ENCODE measurements at regions of chr2 and their contacts with region 1.

Region 1: GRCh38 chr2:160353166-160353565 is 140.4 kb downstream of the RBMS1 start:
- DNase-seq: peak; percentile 39 to 61 (median 55)
- H3K4me3 ChIP-seq: no peak overlapping the region
- H3K27ac ChIP-seq: no peak overlapping the region
- H3K4me1 ChIP-seq: peaks cover 0 to 7% (median 0%) of the 10 kb centered on the region in 4 experiments
- H3K27me3 ChIP-seq: no peaks in the 10 kb centered on the region

Region 2: GRCh38 chr2:160332318-160332717 is 20.8 kb before region 1 on chr2:
- CTCF ChIA-PET with region 1: interaction called, 14 read pairs
- POLR2A ChIA-PET with region 1: no interaction called
- DNase-seq: peak; percentile 30 to 47 (median 41)
- H3K4me3 ChIP-seq: no peak overlapping the region
- H3K27ac ChIP-seq: no peak overlapping the region
- H3K4me1 ChIP-seq: peaks cover 0 to 14% (median 8%) of the 10 kb centered on the region in 4 experiments
- H3K27me3 ChIP-seq: no peaks in the 10 kb centered on the region

Region 3: DNA sequence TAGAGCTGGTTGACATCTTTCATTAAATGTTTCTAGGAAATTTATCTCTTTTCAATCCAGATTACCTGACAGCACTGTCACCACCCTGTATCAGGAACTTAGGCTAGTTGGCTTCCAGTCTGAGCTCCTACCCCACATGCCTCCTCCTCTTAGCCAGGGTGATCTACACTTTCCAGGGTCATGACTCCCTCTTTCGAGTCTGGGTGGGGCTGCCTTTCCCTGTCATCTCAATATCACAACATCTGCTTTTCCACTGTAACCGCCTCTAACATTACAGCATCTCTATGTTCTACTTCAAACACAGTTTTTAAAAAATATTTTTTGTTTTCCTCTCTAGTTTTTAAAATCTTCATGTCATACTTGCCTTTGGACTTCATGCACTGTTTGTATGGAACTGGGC is 11.2 kb after region 1 on chr2:
- CTCF ChIA-PET with region 1: interaction called, 15 read pairs
- POLR2A ChIA-PET with region 1: no interaction called
- DNase-seq: no peak
- H3K4me3 ChIP-seq: no peak overlapping the region
- H3K27ac ChIP-seq: no peak overlapping the region
- H3K4me1 ChIP-seq: peaks cover 2 to 27% (median 8%) of the 10 kb centered on the region in 4 experiments
- H3K27me3 ChIP-seq: no peaks in the 10 kb centered on the region

Region 4: DNA sequence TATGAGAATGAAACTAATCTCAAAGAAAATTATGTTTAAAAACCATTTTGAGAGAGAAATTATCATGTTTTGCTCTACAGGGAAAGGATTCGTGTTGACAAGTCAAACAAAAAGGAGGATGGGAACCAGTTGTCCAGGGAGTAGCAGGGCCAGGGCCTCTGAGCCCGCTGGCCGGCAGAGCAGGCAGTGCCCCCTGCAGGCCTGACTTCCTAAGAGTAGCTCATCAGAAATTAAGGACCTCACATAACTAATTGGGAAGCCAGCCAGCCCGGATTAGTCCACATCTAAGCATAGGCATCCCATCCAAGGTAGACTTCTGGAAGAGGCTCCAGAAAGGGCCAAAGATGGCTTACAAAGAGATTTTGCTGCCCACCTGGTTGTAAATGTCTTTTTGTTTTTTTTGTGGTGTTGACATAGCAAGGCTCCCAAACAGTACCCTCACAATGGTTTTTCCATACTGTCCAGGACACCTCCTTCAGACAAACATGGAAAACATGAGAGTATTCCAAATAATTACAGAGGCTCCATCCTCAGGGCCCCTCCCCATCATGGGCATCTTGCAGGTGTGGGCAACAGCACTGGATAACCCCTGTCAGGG is 565.8 kb after region 1 on chr2:
- CTCF ChIA-PET with region 1: interaction called, 20 read pairs
- POLR2A ChIA-PET with region 1: no interaction called
- DNase-seq: peak; percentile 36 to 51 (median 51)
- H3K4me3 ChIP-seq: no peak overlapping the region
- H3K27ac ChIP-seq: no peak overlapping the region
- H3K4me1 ChIP-seq: no peaks in the 10 kb centered on the region
- H3K27me3 ChIP-seq: no peaks in the 10 kb centered on the region

Region 5: DNA sequence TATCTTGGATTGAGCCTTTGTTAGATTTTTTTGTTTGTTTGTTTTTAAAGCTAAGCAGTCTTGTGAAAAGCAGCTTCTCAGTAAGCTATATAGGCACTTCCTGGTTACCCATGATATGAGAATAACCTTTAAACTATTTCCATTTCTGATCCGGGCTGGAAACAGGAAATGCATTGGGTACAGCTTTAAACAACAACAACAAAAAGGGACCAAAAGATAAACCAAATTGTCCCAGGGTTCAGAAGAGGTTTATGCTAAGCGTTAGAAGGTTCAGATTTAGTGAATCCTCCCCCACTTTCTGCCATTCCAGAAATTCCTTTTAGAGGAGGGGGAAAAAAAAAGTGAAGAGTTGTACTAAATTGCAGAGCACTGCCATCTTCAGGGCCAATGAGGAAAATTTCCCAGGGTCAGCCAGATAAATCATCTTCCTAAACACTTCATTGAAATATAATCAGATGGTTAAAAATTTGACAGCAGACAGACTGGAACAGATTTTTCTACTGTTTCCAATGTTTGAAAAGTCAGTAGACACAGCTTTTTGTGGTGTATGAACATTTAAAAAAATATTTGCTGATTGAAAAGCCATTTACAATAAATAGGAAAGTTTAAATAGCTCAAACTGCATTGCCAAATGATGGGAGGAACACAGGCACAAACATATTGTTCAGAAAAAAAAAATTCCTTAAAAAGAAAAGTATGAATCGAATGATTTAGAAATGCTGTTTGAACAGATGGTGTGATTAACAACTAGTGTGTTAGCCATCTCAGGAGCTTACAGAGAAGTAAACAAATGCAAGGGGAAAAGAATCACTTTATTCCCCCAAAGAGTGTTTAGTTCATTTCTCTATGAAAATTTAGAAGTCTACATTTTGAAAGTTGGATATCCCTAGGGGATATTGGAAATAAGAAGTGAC is 617.1 kb after region 1 on chr2:
- CTCF ChIA-PET with region 1: interaction called, 18 read pairs
- POLR2A ChIA-PET with region 1: no interaction called
- DNase-seq: peak; percentile 37 to 57 (median 56)
- H3K4me3 ChIP-seq: peak overlapping the region in 1 of 7 experiments; percentile 36
- H3K27ac ChIP-seq: no peak overlapping the region
- H3K4me1 ChIP-seq: no peaks in the 10 kb centered on the region
- H3K27me3 ChIP-seq: no peaks in the 10 kb centered on the region

Region 6: DNA sequence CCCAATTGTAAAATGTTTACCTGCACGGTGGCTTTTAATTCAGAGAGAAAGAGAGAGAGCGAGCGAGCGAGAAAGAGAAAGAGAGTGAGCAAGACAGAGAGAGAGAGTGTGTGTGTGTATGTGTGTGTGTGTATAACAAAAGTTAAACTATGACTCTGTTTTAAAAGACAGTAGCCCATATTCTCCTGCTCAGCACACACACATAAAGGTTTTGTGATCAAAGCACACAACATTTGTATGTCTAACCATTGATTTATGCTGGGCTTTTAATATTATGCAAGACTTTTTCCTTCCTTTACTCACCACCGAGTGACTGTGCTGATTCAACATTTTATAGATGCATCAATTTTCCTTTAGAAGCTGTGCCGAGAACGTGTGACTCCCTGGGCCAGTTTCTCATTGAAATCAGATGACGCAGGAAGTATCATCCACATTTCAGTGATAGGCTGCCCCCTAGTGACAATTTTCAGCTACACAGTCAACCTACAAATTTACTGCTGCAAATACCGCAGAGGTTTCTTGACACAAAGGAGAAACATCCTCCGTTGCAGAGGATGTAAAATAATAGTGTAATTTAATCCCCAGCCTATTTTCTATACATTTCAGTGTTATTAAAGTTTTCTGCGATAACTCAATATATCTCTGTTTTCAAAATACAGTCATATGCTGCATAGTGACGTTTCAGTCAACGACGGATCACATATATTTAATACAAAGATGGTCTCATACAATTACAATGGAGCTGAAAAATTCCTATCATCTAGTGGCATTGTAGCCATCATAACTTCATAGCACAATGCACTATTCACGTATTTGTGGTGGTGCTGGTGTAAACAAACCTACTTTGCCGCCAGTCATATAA is 641.2 kb after region 1 on chr2:
- CTCF ChIA-PET with region 1: interaction called, 13 read pairs
- POLR2A ChIA-PET with region 1: no interaction called
- DNase-seq: peak; percentile 82 to 92 (median 90)
- H3K4me3 ChIP-seq: peak overlapping the region in 1 of 7 experiments; percentile 34
- H3K27ac ChIP-seq: no peak overlapping the region
- H3K4me1 ChIP-seq: peaks cover 0 to 8% (median 0%) of the 10 kb centered on the region in 4 experiments
- H3K27me3 ChIP-seq: no peaks in the 10 kb centered on the region

Measured in common myeloid progenitor, CD34-positive (primary cell).